GM10248 (cell line): ENCODE measurements at regions of chr3 and their contacts with region 1.

Region 1: DNA sequence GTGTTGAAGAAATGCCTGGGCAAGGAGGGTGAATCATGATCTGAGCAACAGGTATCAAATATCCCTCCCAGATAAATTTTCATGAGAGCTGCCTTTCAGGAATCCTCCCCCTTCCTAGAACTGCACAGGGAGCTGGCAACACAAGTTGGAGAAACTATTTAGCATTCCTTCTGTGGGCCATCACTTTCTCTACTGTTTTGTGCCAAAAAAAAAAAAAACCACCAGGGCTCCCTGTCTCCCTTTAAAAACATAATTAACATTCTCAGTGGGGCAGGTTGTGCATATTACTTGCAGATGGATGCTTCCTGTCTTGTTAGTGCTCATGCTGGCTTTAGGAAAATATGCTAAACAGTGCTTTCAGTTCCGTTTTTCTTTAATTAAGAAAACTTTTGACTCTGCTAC is 234.9 kb upstream of the LMCD1 start:
- DNase-seq: no peak
- CTCF ChIP-seq: no peak

Region 2: GRCh38 chr3:8254489-8254888 is 12.2 kb before region 1 on chr3:
- CTCF ChIA-PET with region 1: interaction called, 15 read pairs
- POLR2A ChIA-PET with region 1: no interaction called
- DNase-seq: no peak
- CTCF ChIP-seq: no peak